Left ventricle myocardium inferior (tissue), 1 donor: ENCODE measurements at regions of chr11 and their contacts with region 1.

Region 1: GRCh38 chr11:27183672-27184457 is 143.2 kb downstream of the BBOX1 start:
- DNase-seq: no peak
- H3K4me3 ChIP-seq: no peak overlapping the region
- H3K27ac ChIP-seq: no peak overlapping the region
- H3K4me1 ChIP-seq: peaks cover 4% of the 10 kb centered on the region
- H3K27me3 ChIP-seq: no peaks in the 10 kb centered on the region
- CTCF ChIP-seq: peak; percentile 76

Region 2: GRCh38 chr11:26780376-26781085 is 403.3 kb before region 1 on chr11:
- intact Hi-C with region 1: no loop called
- DNase-seq: no peak
- H3K4me3 ChIP-seq: no peak overlapping the region
- H3K27ac ChIP-seq: no peak overlapping the region
- H3K4me1 ChIP-seq: peaks cover 3% of the 10 kb centered on the region
- H3K27me3 ChIP-seq: no peaks in the 10 kb centered on the region
- CTCF ChIP-seq: no peak

Region 3: DNA sequence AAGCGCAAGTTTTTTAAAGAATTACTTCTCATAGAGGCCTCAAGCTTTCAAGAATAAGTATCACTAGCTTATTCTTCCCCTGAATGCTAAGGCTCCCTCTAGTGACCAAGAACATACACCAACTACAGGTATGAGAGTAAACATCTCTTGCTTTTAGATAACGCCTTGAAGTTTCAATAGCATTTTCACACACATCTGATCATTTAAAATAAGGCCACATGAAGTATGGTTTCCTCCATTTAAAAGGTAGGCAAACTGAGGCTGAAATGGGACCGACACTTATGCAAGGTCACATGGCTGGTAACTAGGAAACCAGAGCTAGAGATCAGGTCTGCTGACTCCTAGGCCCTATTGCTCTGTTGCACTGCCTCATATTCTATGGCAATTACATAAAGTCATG is 112.6 kb after region 1 on chr11:
- intact Hi-C with region 1: loop called (anchors 5 kb)
- DNase-seq: no peak
- H3K4me3 ChIP-seq: no peak overlapping the region
- H3K27ac ChIP-seq: peak overlapping the region; percentile 16
- H3K4me1 ChIP-seq: peaks cover 7% of the 10 kb centered on the region
- H3K27me3 ChIP-seq: no peaks in the 10 kb centered on the region
- CTCF ChIP-seq: peak; percentile 75

Region 4: DNA sequence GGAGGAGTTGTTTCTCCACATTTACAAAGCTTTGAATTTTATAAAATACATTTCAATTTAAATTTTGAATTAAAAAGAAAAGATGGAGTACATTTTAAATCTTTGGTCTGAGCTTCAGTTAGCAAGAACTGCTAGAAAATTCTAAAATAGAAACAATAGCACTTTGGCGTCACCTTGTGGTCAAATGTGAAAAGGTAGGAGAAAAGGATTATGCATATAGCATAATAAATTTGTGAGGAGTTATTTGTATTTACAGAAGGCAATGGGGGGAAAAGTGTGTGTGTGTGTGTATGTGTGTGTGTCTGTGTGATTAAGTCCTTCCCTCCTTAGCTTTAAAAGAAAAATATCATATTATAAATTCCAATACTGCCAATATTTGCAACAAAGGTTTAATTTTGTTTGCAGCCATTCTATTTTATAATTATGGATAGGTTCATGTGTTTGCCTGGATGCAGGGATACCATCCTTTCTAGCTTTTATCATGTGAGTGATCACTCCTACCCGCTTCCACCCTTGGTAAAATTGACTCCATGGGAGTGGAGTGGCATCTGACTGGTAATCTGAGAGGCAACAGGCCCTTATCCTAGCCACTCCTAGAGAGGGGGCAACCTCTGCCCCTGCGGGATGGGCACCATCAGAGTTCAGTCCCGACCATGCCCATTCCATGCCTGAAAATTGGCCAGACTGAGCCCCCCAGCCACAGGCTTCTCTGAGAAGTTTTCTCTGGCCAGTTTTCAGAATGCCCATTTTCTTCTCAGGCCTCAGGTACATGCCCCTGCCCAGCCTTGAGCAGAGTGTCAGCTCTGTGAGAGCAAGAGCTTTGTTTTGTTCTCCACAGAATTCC is 302.3 kb after region 1 on chr11:
- intact Hi-C with region 1: loop called (anchors 5 kb)
- DNase-seq: no peak
- H3K4me3 ChIP-seq: no peak overlapping the region
- H3K27ac ChIP-seq: no peak overlapping the region
- H3K4me1 ChIP-seq: no peaks in the 10 kb centered on the region
- H3K27me3 ChIP-seq: no peaks in the 10 kb centered on the region
- CTCF ChIP-seq: peak; percentile 90